Mucosa of descending colon (tissue), 3 donors: ENCODE measurements at regions of chr11 and their contacts with region 1.

Region 1: DNA sequence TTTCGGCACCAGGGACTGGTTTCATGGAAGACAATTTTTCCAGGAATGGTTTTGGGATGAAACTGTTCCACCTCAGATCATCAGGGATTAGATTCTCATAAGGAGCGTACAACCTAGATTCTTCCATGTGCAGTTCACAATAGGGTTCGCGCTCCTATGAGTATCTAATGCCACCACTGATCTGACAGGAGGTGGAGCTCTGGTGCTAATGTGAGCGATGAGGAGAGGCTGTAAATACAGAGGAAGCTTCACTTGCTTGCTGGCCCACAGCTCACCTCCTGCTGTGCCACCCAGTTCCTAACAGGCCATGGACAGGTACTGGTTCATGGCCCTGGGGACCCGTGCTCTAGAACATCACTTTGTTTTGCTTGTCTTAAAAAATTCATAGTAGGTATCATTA is 41.8 kb upstream of the AMPD3 start:
- DNase-seq: peak in 1 of 3 donors; percentile 51
- ATAC-seq: peak; percentile 63
- H3K4me3 ChIP-seq: no peak overlapping the region
- H3K4me1 ChIP-seq: no peaks in the 10 kb centered on the region
- CTCF ChIP-seq: no peak

Region 2: DNA sequence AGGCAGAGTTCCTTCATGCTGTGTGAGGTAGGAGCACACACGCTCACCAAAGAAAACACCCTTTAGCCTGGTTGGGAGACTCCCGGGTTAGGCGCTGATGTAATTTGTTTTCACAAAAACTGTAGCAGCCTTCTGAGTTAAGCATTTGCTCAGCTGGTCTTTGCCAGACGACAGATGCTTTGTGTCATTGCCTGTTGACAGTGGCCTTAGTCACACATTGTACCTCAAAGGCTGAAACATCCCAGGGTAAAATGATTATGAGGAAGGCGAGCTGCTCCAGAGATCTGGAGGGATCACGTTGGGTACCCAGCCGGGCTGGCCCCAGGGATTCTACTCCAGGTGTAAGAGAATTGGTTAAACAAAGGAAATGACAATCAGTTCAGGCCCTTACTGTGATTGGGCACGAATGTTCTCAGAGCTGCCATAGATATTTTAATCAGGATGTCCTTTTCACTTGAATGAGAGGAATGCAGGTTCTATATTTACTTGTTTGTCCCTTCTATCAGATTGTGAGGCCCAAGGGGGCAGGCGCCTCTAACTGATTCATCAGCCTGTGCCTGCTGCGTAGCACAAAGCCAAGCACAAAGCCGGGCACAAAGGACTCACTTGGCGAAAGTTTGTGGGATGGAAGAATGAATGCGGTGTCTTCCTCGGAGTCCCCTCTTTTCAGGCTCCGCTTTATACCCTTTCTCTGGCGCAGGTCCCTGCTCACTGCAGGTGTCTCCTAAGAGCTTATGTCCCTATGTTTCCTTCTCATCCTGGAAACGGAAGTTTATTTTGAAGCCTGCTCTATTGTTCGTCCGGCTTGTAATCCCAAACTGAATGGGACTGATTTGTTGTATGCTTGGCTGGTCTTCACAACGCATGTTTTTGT is 61.3 kb before region 1 on chr11:
- intact Hi-C with region 1: no loop called
- DNase-seq: peak in 2 of 3 donors; percentile 27 to 62
- ATAC-seq: peak; percentile 93
- H3K4me3 ChIP-seq: no peak overlapping the region
- H3K4me1 ChIP-seq: no peaks in the 10 kb centered on the region
- CTCF ChIP-seq: no peak

Region 3: DNA sequence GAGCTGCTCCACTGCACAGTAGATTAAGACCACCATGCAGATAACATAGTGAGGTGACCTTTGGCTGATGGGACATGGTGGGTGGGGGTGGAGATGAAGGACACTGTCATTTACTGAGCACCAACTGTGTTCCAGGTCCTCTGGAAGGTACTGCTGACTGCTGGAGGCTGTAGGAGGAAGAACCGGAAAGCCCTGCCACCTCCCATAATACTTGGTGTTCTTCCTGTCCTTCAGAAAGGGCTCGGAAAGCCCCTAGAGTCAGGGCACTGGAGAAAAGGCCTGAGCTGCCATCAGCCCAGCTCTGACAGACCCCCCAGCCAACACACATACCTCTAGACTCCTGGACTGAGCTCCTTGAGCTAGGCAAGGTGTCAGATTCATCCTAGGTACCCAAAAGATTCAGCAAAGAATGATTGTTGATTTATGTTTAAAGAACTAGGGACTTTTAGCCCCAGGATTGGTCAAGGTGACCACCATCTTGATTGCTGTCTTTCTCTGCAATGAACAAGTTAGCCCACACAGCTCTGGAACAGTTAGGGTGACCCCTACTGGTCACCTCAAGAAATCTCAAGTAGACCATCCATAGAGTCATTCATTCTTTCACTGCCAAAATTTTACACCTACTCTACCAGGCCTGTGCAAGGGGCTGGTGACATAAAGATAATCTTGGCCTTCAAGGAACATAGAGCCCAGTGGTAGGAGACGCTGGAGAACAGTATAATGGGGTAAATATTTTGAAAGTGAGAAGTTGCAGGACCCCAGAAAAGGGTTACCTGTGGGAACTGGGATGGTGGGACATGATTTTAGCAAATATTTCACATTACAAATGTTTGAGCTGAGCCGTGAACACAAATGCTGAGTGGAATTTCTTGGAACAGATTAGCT is 240.9 kb after region 1 on chr11:
- intact Hi-C with region 1: loop called in 1 of 2 experiments (anchors 10 kb)
- DNase-seq: no peak
- ATAC-seq: peak; percentile 78
- H3K4me3 ChIP-seq: no peak overlapping the region
- H3K4me1 ChIP-seq: peaks cover 14% of the 10 kb centered on the region
- CTCF ChIP-seq: peak; percentile 17

Region 4: GRCh38 chr11:10808553-10809372 is 395.5 kb after region 1 on chr11 and contains the start of gene EIF4G2:
- intact Hi-C with region 1: no loop called
- DNase-seq: peak; percentile 97 to 99 (median 99)
- ATAC-seq: peak; percentile 93
- H3K4me3 ChIP-seq: peak within 1 kb of the TSS; percentile 100
- H3K4me1 ChIP-seq: peaks cover 30% of the 10 kb centered on the region
- CTCF ChIP-seq: peak; percentile 7
- total RNA-seq, gene EIF4G2: 776 to 976 (median 934) TPM